Endothelial cell of umbilical vein (primary cell): ENCODE measurements at regions of chr19 and their contacts with region 1.

Region 1: GRCh38 chr19:16628183-16628983 is at the start of gene MED26:
- DNase-seq: peak; percentile 94
- H3K4me3 ChIP-seq: peak within 1 kb of the TSS; percentile 79 to 90 (median 90)
- H3K27ac ChIP-seq: peak within 1 kb of the TSS; percentile 60
- H3K4me1 ChIP-seq: peaks cover 18% of the 10 kb centered on the region
- H3K27me3 ChIP-seq: no peaks in the 10 kb centered on the region
- CTCF ChIP-seq: peak in 1 of 2 donors; percentile 16
- POLR2A ChIP-seq: peak; percentile 92
- total RNA-seq, gene MED26: 9.2 and 13.4 TPM in 2 replicates

Region 2: DNA sequence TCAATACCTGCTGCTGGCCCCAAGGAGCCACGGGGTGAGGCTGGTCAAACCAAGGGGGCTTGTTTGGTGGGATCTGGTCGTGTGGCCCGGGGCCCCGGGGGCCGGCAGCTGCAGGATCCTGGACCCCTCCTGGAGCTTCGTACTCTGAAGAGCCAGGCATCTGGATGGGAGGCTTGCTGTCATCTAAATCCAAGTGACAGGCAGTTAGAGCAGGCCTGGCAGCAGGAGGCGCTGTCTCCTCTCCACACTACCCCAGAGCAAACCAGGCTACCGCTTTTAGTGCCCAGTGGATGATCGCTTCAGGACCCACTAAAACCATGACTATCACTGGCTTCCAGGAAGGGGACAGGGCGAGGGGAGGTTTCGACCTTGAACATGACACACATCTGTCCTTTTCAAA is 100.3 kb before region 1 on chr19:
- CTCF ChIA-PET with region 1: no interaction called
- POLR2A ChIA-PET with region 1: no interaction called
- dilution Hi-C with region 1: no loop called
- intact Hi-C with region 1: loop called (anchors 5 kb)
- DNase-seq: peak; percentile 17
- H3K4me3 ChIP-seq: no peak overlapping the region
- H3K27ac ChIP-seq: no peak overlapping the region
- H3K4me1 ChIP-seq: no peaks in the 10 kb centered on the region
- H3K27me3 ChIP-seq: no peaks in the 10 kb centered on the region
- CTCF ChIP-seq: peak; percentile 52 to 53
- POLR2A ChIP-seq: no peak

Region 3: GRCh38 chr19:16542045-16542909 is 86.1 kb before region 1 on chr19 and contains the start of gene CHERP:
- CTCF ChIA-PET with region 1: no interaction called
- POLR2A ChIA-PET with region 1: interaction called, 6 read pairs
- dilution Hi-C with region 1: no loop called
- intact Hi-C with region 1: loop called (anchors 1 kb)
- DNase-seq: peak; percentile 93
- H3K4me3 ChIP-seq: peak within 1 kb of the TSS; percentile 66 to 85 (median 70)
- H3K27ac ChIP-seq: peak within 1 kb of the TSS; percentile 70
- H3K4me1 ChIP-seq: peaks cover 12% of the 10 kb centered on the region
- H3K27me3 ChIP-seq: no peaks in the 10 kb centered on the region
- CTCF ChIP-seq: no peak
- POLR2A ChIP-seq: peak; percentile 91
- total RNA-seq, gene CHERP: 53.9 and 54.5 TPM in 2 replicates

Region 4: DNA sequence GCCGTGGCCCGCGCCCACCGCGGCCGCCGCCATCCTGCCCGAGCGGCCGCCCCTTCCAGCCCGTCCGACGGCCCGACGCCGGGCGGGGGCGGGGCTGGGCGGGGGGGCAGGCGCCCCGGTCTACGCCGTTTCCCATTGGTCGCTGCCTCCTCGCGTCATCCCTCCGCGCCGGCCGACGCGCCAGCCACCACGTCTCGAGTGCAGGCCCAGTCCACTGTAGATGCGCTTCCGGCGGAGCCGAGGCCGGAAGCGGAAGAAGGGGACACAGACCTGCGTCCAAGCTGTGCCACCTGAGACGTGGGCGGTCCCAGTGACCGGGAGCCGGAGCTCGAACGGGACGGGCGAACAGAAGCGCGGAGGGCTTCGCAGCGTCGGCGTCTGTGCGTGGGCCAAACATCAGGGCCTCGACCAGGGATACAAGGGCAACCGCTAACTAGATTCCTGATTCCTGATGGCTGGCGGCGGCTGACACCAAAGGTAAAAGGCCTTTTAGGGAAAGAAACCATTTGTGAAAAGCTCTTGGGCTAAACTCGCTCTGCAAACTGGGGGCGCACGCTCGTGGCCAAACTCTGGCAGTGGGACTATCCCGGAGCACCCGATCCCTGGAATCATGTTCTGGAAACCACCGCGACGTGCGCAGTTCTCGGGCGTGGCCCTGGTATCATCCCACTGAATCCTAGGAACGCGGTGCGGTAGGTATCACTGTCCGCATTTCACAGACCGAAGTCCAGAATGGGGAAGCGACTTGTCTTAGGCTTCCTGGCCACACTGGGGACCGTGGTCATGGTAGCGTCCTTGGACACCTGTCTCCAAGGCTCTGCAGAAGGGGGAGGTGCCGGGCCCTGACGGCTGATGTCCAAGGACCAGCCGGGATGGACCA is 55.8 kb before region 1 on chr19 and contains the start of gene SLC35E1:
- CTCF ChIA-PET with region 1: no interaction called
- POLR2A ChIA-PET with region 1: no interaction called
- dilution Hi-C with region 1: no loop called
- intact Hi-C with region 1: loop called (anchors 1 kb)
- DNase-seq: peak; percentile 93
- H3K4me3 ChIP-seq: peak within 1 kb of the TSS; percentile 64 to 75 (median 73)
- H3K27ac ChIP-seq: peak within 1 kb of the TSS; percentile 73
- H3K4me1 ChIP-seq: peaks cover 16% of the 10 kb centered on the region
- H3K27me3 ChIP-seq: no peaks in the 10 kb centered on the region
- CTCF ChIP-seq: no peak
- POLR2A ChIP-seq: no peak
- total RNA-seq, gene SLC35E1: 30.4 and 37.5 TPM in 2 replicates

Region 5: GRCh38 chr19:16584248-16585141 is 43.9 kb before region 1 on chr19:
- CTCF ChIA-PET with region 1: interaction called, 3 read pairs
- POLR2A ChIA-PET with region 1: interaction called, 3 read pairs
- dilution Hi-C with region 1: no loop called
- intact Hi-C with region 1: loop called (anchors 2 kb)
- DNase-seq: peak; percentile 80
- H3K4me3 ChIP-seq: no peak overlapping the region
- H3K27ac ChIP-seq: peak overlapping the region; percentile 54
- H3K4me1 ChIP-seq: peaks cover 39% of the 10 kb centered on the region
- H3K27me3 ChIP-seq: no peaks in the 10 kb centered on the region
- CTCF ChIP-seq: no peak
- POLR2A ChIP-seq: peak; percentile 28

Region 6: GRCh38 chr19:16659831-16660708 is 31.7 kb after region 1 on chr19 and contains the start of gene SMIM7:
- CTCF ChIA-PET with region 1: interaction called, 3 read pairs
- POLR2A ChIA-PET with region 1: interaction called, 8 read pairs
- dilution Hi-C with region 1: no loop called
- intact Hi-C with region 1: loop called (anchors 1 kb)
- DNase-seq: peak; percentile 99
- H3K4me3 ChIP-seq: peak within 1 kb of the TSS; percentile 55 to 73 (median 67)
- H3K27ac ChIP-seq: peak within 1 kb of the TSS; percentile 70
- H3K4me1 ChIP-seq: peaks cover 16% of the 10 kb centered on the region
- H3K27me3 ChIP-seq: no peaks in the 10 kb centered on the region
- CTCF ChIP-seq: no peak
- POLR2A ChIP-seq: peak; percentile 92
- total RNA-seq, gene SMIM7: 45.7 and 51.1 TPM in 2 replicates